PC-9 (cell line): ENCODE measurements at regions of chr4 and their contacts with region 1.

Region 1: GRCh38 chr4:145154573-145154972 is 25.8 kb downstream of the OTUD4 start:
- DNase-seq: no peak
- H3K4me3 ChIP-seq: no peak overlapping the region
- H3K27ac ChIP-seq: no peak overlapping the region
- H3K4me1 ChIP-seq: no peaks in the 10 kb centered on the region
- H3K27me3 ChIP-seq: no peaks in the 10 kb centered on the region
- CTCF ChIP-seq: 0 out of 2 replicates have a peak, but pooled peaks have one; percentile 31

Region 2: DNA sequence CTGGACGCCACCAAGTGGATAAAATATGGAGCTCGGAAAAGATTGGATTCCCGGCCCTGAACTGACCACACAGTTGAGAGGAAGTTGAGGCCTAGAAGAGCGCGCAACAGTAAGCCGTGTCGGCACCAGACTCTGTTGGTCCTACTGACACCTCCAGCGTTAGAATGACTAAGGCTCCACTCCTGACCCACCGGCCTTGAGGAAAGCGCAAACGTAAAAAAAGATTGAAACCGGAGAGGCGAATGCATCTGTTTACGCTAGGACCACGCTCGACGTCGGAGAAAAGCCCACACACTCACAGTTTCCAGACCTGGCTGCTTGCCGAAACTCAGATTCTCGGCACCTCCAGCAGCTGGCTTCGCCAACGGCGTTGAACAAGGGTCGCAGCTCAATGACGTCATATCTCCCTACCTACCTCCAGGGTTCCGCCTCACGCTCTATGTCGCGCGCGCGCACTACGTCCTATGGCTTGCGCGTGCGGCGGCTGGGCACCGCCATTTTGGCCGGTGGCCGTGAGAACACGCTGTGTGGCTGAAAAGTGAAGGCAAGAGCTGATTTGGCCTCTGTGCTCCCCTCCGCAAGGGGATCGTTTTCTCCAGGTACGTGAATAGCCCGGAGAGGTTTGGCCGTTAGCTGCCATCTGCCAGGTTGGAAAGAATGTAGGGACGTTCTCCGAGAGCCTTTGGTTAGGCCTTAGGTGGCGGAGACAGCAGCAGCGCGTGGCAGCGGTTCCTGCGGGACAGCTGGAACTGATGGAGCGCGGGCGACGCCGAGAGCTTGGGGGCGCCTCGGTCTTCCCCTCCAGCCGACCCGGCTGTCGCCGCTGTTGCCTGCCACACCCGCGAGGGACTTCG is 56.5 kb before region 1 on chr4 and contains the starts of genes ABCE1 and ANAPC10:
- CTCF ChIA-PET with region 1: no interaction called
- POLR2A ChIA-PET with region 1: no interaction called
- intact Hi-C with region 1: loop called (anchors 10 kb)
- DNase-seq: peak; percentile 86 to 90
- H3K4me3 ChIP-seq: peak within 1 kb of the TSS; percentile 78
- H3K27ac ChIP-seq: peak within 1 kb of the TSS; percentile 82
- H3K4me1 ChIP-seq: peaks cover 20% of the 10 kb centered on the region
- H3K27me3 ChIP-seq: no peaks in the 10 kb centered on the region
- CTCF ChIP-seq: no peak
- total RNA-seq, gene ABCE1: 55.1 and 60.6 TPM in 2 replicates
- total RNA-seq, gene ANAPC10: 16.5 and 20.2 TPM in 2 replicates

Region 3: DNA sequence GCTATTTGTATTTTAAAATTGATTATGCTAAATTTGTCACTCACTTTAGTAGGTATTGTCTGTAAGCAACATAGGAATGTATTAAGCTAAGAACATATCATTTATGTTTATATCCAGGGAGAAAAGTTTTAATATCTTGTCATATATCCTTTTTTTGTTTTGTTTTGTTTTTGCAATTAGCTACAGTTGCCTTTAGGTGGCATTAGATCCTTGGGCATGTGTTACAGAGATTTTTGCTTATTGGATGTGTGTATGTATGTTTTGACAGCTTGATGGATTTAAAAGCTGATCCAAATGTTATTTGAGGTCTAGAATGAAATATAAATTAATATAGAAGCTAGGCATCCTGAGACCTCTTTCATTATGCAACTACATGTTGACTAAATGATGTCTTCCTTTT is 62.0 kb after region 1 on chr4:
- CTCF ChIA-PET with region 1: no interaction called
- POLR2A ChIA-PET with region 1: no interaction called
- intact Hi-C with region 1: loop called (anchors 10 kb)
- DNase-seq: no peak
- H3K4me3 ChIP-seq: no peak overlapping the region
- H3K27ac ChIP-seq: no peak overlapping the region
- H3K4me1 ChIP-seq: no peaks in the 10 kb centered on the region
- H3K27me3 ChIP-seq: no peaks in the 10 kb centered on the region
- CTCF ChIP-seq: peak; percentile 67

Region 4: GRCh38 chr4:145234091-145234706 is 79.6 kb after region 1 on chr4:
- CTCF ChIA-PET with region 1: no interaction called
- POLR2A ChIA-PET with region 1: no interaction called
- intact Hi-C with region 1: loop called (anchors 1 kb)
- DNase-seq: peak; percentile 45 to 53
- H3K4me3 ChIP-seq: no peak overlapping the region
- H3K27ac ChIP-seq: no peak overlapping the region
- H3K4me1 ChIP-seq: no peaks in the 10 kb centered on the region
- H3K27me3 ChIP-seq: no peaks in the 10 kb centered on the region
- CTCF ChIP-seq: peak; percentile 81